ENCODE measurements at regions of chr7 and their contacts with region 1.

Region 1: GRCh38 chr7:132580717-132581285 is 4.5 kb upstream of the PLXNA4 start:
- DNase-seq: peak; percentile 92
- H3K4me3 Mint-ChIP-seq: no peak overlapping the region
- H3K27ac Mint-ChIP-seq: no peak overlapping the region
- H3K4me1 Mint-ChIP-seq: peaks cover 14% of the 10 kb centered on the region
- H3K27me3 Mint-ChIP-seq: peaks cover 58% of the 10 kb centered on the region

Region 2: DNA sequence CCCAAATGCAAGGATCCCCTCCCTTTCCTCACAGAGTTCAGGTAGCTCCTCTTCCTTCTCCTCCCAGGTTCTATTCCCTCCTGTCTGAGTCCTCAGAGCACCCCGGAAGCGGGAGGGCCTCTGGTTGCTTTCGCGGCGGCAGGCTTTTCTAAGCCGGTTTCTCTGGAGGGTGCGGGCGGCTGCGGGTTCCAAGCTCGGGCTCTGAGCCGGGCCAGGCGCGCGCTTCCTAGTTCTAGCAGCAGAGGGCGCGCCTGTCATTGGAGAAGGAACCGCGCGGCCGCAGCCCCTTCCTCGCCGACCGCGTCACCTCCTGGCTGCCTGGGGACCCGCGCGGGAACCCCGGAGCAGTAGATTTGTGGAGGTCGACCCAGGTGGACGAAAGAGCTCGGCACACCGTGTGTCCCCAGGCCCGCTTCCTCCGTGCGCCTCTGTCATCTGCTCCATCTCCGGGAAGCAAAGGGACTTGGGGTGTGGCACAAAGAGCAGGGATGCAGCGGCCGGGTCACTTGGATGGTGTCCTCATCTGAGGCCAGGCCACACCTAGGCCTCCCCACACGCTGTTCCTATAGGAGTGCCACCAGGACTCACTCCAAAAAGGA is 635.4 kb before region 1 on chr7:
- intact Hi-C with region 1: loop called (anchors 2 kb)
- DNase-seq: peak; percentile 84
- H3K4me3 Mint-ChIP-seq: no peak overlapping the region
- H3K27ac Mint-ChIP-seq: no peak overlapping the region
- H3K4me1 Mint-ChIP-seq: no peaks in the 10 kb centered on the region
- H3K27me3 Mint-ChIP-seq: peaks cover 2% of the 10 kb centered on the region

Region 3: DNA sequence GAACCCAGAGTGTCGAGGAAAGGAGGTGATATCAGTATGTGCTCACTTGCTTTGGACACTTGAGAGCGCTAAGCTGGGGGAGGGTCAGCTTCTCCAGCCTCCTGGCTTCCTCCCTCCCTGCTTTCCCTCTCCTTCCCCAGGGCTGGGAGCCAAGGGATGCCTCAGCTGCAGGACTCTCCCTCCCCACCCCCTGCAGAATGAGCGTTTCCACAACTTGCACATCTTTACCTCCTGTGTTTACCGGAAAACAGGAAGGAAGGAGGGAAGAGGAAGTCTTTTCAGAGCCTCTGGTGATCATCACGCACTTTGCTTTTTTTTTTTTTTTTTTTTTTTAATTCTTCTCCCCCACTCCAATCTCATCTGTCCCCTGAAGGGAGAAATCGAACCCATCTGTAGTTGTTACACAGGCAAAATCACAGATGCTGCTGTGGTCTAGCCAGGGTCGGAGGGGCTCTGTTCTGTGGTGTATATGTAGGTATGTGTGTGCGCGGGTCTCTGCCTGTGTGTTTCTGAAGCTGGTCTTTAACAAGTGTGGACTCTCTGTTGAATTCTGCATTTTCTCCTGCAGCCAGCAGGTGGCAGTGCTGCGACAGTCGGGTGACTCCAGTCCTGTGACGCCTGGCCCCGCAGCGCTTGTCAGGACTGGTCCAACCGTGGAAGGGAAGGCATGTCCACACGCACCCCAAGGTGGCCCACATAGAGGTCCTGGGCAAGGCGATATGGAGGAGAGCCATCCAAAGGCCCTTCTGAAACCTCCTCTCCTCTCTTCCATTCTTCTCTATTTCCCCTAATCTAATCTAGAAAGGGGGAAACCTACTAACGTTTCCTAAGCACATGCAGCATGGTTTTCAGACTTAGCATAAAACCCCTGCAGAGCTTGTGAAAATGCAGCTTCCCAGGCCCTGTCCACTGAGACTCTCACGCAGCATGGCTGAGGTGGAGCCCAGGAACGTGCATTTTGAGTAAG is 262.2 kb before region 1 on chr7:
- intact Hi-C with region 1: loop called (anchors 1 kb)
- DNase-seq: peak; percentile 93
- H3K4me3 Mint-ChIP-seq: peak overlapping the region; percentile 14
- H3K27ac Mint-ChIP-seq: no peak overlapping the region
- H3K4me1 Mint-ChIP-seq: peaks cover 13% of the 10 kb centered on the region
- H3K27me3 Mint-ChIP-seq: peaks cover 36% of the 10 kb centered on the region

Region 4: DNA sequence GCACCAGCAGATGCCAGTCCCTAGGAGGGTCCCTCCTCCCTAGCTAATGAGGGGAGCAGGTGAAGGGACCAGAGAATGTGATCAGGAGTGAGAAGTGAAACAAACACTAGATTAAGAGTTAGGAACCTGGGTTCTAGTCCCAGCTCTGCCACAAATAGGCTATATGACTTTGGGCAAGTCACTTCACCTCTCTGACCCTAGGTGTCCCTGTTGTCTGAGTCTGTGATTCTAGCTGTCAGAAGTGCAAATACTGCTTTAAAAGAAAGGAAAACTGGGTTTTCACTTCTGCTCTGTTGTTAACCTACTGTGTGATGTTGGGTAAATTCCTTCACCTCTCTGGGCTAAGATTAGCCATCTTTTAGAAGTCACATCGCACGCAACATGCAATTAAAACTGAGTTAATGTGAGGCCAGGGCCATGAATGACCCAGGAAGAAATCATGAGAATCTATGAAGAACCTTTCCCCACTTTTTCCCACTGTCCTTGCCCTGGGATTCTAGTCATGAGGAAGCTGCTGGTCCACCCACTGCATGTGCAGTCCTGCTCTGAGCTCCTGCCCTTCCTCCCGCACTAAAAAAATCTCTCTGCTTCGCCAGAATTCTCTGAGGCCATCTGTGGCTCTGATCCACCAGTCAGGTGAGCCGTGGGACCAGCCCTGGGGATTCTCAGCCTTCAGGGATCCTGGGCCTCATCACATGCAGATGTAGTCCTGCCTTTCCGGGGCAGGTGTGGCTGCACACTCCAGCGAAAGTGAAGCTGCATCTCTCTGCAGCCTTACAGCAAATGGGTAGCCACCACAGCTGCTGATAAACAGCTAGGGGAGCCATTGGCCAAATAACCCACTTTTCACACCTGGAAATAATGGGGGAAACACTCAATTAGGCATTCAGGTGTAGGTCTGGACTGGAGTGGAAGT is 186.3 kb before region 1 on chr7:
- intact Hi-C with region 1: loop called (anchors 1 kb)
- DNase-seq: peak; percentile 83
- H3K4me3 Mint-ChIP-seq: no peak overlapping the region
- H3K27ac Mint-ChIP-seq: peak overlapping the region; percentile 10
- H3K4me1 Mint-ChIP-seq: peaks cover 26% of the 10 kb centered on the region
- H3K27me3 Mint-ChIP-seq: peaks cover 10% of the 10 kb centered on the region

Region 5: DNA sequence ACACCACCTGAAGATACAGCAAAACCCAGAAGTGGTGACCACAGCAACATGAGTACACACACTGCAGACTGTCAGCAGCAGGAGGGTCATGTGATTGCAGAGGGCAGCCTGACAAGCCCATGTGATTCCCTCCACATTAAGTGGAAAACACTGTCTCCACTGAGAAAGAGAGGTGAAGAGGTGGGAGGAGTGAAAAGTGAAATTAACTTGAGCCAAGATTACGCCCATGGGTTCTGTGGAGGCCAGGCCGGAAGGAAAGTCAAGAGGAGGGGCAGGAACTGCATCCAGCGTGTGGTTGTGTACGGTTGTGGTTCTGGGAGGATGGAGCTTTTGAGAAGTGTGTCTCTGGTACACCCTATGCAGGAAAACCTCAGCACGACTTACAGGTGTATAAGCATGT is 143.1 kb before region 1 on chr7:
- intact Hi-C with region 1: loop called (anchors 5 kb)
- DNase-seq: peak; percentile 92
- H3K4me3 Mint-ChIP-seq: peak overlapping the region; percentile 49
- H3K27ac Mint-ChIP-seq: peak overlapping the region; percentile 79
- H3K4me1 Mint-ChIP-seq: peaks cover 88% of the 10 kb centered on the region
- H3K27me3 Mint-ChIP-seq: no peaks in the 10 kb centered on the region

Region 6: DNA sequence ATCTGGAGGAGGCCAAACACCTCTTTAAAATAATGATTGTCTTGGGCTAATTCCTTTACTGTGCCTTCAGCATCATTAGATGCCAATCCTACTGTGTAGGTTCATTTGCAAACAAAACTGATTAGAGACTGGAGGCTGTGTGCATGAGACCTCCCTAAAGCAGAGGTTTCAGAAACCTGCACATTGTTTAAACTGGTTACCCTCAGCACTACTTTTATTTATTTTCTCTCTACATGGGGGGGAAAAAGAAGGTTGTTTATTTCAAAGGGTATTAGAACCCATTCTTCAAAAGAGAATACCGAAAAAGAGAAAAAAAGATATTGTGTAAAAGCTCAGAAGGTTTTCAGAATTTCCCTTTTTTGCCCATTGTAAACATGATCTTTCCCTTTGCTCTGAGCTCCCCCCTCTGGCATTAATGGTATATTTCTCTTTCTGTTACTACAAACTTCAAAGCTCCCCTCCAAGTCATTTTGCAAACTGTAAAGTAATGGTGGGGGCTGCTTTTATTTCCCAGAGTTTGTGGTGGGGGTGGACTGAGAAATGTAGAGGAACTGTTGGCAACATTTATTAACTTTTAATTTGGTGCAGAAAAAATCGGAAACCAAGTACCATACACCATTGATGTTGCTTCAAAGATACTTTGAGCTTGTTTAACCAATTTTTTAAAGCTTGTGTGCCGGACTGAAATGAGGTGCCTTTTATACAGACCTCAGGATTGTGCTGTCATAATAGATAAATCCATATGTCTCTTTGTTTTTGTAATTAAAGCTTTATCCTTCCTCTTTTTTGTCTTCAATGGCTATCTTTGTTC is 853.5 kb after region 1 on chr7:
- intact Hi-C with region 1: loop called (anchors 2 kb)
- DNase-seq: no peak
- H3K4me3 Mint-ChIP-seq: no peak overlapping the region
- H3K27ac Mint-ChIP-seq: no peak overlapping the region
- H3K4me1 Mint-ChIP-seq: no peaks in the 10 kb centered on the region
- H3K27me3 Mint-ChIP-seq: no peaks in the 10 kb centered on the region

Measured in activated CD4-positive, alpha-beta T cell treated with anti-CD3 and anti-CD28 coated beads, Interleukin-2, amount 10 ng/mL, durations not matched to agents 24 days and 14 days (primary cell).